Cardiac septum (tissue), 1 donor: ENCODE measurements at regions of chr19 and their contacts with region 1.

Region 1: DNA sequence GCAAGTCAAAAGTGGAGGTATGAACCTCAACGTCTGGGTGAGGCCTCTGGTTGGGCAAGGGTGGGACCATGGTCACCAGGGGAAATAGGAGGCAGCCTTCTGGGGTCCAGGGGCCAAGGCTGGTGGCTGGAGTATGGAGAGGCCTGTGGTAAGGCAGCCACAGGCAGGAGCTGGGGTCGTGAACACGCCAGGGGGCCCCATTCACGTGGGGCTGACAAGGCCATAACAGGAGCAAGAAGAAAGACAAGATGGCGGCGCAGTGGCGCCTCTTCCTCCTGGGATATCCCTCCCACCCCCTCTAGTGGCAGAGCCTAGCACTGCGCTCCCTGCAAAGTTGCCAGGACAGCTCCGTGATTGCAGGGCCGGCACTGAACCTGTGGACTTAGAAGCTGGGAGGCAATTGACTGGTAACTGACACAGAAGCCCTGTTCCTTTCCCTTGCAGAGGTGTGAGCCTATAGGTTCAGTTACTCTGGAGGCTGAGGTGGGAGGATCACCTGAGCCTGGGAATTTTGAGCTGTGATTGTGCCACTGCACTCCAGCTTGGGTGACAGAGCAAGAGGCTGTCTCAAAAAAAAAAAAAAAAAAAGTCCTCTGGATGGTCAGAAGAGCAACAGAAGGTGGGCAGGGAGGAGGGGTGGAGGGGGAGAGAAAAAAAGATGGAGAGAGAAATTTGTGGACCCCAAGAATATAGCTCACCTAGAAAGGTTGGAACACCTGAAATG is 19.7 kb upstream of the EDDM13 start:
- DNase-seq: peak; percentile 89

Region 2: GRCh38 chr19:56284746-56285145 is 31.9 kb after region 1 on chr19:
- intact Hi-C with region 1: no loop called
- DNase-seq: no peak

Region 3: DNA sequence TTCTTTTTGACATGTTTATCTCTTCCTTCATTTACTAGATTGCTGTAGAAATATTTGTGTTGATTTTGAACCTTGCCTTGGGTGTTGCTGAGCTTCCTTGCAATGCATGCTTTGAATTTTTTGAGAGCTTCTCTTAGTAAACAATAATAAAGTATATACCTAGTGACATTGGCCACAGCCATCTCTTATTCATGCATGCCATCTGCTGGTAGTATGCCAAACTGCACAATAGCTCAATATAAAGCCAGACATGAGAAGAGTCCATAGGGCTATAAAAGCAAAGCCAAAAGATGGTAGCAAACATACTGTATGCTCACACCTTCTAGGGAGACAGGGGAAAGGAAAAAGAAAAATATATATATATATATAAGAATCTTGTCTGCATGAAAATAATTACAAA is 80.6 kb after region 1 on chr19:
- intact Hi-C with region 1: loop called (anchors 2 kb)
- DNase-seq: no peak

Region 4: GRCh38 chr19:56348289-56348877 is 95.5 kb after region 1 on chr19:
- intact Hi-C with region 1: loop called (anchors 5 kb)
- DNase-seq: no peak